Mammary epithelial cell (primary cell): ENCODE measurements at regions of chr18 and their contacts with region 1.

Region 1: DNA sequence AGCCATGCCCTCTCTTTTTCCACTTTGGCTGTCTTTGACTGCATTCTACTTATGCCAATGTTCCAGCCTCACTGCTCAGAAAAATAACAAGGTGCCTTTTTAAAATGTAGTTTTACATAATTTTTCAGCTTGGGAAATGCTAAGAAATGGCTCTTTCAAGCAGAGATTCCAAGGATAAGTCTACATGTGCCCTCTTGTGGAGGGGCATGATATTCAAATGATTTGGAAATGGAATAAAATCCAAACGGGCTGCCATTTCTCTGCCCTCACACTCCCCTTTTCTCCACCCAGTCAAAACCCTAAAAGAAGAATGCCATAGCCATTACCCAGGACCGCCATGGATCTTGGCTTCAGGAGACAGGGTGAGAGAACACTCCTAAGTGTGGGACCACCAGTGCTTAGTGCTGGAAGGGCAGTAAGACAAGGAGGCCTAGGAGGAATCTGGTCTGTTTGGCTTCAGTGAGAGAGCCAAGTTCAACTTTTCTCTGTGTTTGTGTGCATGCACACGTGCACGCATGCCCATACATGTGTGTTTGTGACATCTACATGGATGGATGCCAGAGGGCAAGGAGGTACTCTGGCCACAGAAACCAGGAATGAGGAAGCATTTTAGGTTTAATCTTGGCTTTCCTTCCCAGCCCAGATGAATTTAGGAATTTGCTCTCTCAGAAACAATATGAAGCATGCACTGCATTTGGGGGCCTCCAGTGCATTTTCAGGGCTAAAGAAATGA is 174.0 kb upstream of the SLC14A2 start:
- DNase-seq: peak; percentile 53
- H3K4me3 ChIP-seq: no peak overlapping the region
- H3K27ac ChIP-seq: no peak overlapping the region
- H3K4me1 ChIP-seq: peaks cover 15% of the 10 kb centered on the region
- H3K27me3 ChIP-seq: no peaks in the 10 kb centered on the region
- CTCF ChIP-seq: peak; percentile 54 to 63

Region 2: GRCh38 chr18:45275367-45276113 is 165.7 kb before region 1 on chr18:
- CTCF ChIA-PET with region 1: no interaction called
- dilution Hi-C with region 1: no loop called
- in situ Hi-C with region 1: loop called in 1 of 2 experiments (anchors 10 kb)
- intact Hi-C with region 1: loop called (anchors 1 kb)
- DNase-seq: peak; percentile 21
- H3K4me3 ChIP-seq: no peak overlapping the region
- H3K27ac ChIP-seq: no peak overlapping the region
- H3K4me1 ChIP-seq: no peaks in the 10 kb centered on the region
- H3K27me3 ChIP-seq: peaks cover 3% of the 10 kb centered on the region
- CTCF ChIP-seq: peak; percentile 82 to 94

Region 3: GRCh38 chr18:45526114-45526841 is 85.0 kb after region 1 on chr18:
- CTCF ChIA-PET with region 1: no interaction called
- dilution Hi-C with region 1: no loop called
- in situ Hi-C with region 1: no loop called
- intact Hi-C with region 1: no loop called
- DNase-seq: peak; percentile 7
- H3K4me3 ChIP-seq: no peak overlapping the region
- H3K27ac ChIP-seq: no peak overlapping the region
- H3K4me1 ChIP-seq: no peaks in the 10 kb centered on the region
- H3K27me3 ChIP-seq: no peaks in the 10 kb centered on the region
- CTCF ChIP-seq: no peak